HCT116 (cell line): ENCODE measurements at regions of chr11 and their contacts with region 1.

Region 1: DNA sequence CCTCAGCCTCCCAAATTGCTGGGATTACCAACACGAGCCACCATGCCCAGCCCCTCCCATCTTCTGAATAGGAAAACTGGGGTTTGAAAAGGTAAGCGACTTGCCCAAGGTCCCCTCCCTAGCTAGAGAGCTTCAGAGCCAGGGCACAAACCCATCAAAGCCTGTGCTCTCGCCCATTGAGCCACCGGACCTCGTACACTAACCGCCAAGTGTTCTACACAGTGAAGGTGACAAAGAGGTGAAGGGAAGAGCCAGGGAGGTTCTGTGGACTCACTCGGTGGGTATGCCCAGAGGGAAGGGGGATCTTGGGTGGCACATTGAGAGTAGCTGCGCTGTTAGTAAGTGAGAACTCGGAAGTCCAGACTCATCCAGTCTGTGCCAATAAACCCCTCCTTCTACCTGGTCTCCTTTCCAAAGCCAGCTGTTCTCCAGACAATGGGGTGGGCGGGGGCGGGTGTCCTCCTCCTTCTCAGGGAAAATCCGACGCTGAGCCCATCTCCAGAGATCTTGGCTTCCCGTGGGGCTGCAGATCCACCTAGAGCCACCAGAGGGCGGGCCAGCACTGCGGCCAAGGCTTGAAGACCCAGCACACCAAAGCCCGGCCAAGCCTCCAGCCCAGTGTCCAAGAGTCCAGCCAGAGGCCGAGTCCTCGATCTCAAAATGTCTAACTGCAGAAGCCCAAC is 3.2 kb upstream of the RTN4RL2 start:
- DNase-seq: peak; percentile 79
- ATAC-seq: peak; percentile 71
- H3K4me3 ChIP-seq: peak overlapping the region in 1 of 2 experiments; percentile 67; a peak in 2 of 4 replicates
- H3K27ac ChIP-seq: no peak overlapping the region
- H3K4me1 ChIP-seq: peaks cover 16 to 42% of the 10 kb centered on the region in 2 experiments; a peak in 3 of 4 replicates
- H3K27me3 ChIP-seq: peaks cover 3% of the 10 kb centered on the region; the same call in 1 of the 2 replicates
- CTCF ChIP-seq: peak; percentile 89 to 99 (median 89)
- POLR2A ChIP-seq: no peak
- RAD21 ChIP-seq: peak; percentile 94

Region 2: GRCh38 chr11:57530596-57531507 is 73.8 kb after region 1 on chr11 and contains the start of gene TIMM10:
- CTCF ChIA-PET with region 1: interaction called, 41 read pairs
- POLR2A ChIA-PET with region 1: interaction called, 3 read pairs
- RAD21 ChIA-PET with region 1: no interaction called
- intact Hi-C with region 1: loop called (anchors 1 kb)
- DNase-seq: peak; percentile 99
- ATAC-seq: peak; percentile 95
- H3K4me3 ChIP-seq: peak within 1 kb of the TSS; percentile 64 to 84
- H3K27ac ChIP-seq: peak within 1 kb of the TSS; percentile 61
- H3K4me1 ChIP-seq: peaks cover 16 to 17% of the 10 kb centered on the region in 2 experiments
- H3K27me3 ChIP-seq: no peaks in the 10 kb centered on the region
- CTCF ChIP-seq: no peak
- POLR2A ChIP-seq: peak; percentile 75
- RAD21 ChIP-seq: peak; percentile 16; the same call in 1 of the 2 replicates
- total RNA-seq, gene TIMM10: 65.6 TPM

Region 3: DNA sequence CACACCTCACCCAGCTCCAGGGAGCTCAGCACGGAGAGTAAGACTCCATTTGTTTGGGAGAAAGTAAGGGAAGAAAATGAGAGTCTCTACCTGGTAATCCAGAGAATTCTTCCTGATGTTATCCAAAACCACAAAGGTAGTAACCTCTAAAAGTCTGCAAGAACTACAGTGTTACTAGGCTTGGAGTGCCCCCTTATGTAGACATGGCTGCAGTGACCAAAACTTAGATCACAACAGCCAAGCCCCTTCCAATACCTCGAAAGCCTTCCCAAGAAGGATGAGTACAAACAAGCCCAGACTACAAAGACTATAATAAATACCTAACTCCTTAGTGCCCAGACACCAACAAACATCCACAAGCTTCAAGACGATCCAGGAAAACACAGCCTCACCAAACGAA is 105.5 kb after region 1 on chr11:
- CTCF ChIA-PET with region 1: interaction called, 4 read pairs
- POLR2A ChIA-PET with region 1: interaction called, 4 read pairs
- RAD21 ChIA-PET with region 1: no interaction called
- intact Hi-C with region 1: loop called (anchors 1 kb)
- DNase-seq: no peak
- ATAC-seq: no peak
- H3K4me3 ChIP-seq: no peak overlapping the region
- H3K27ac ChIP-seq: no peak overlapping the region
- H3K4me1 ChIP-seq: peaks cover 21% of the 10 kb centered on the region in 2 experiments; a peak in 3 of 4 replicates
- H3K27me3 ChIP-seq: no peaks in the 10 kb centered on the region
- CTCF ChIP-seq: no peak
- POLR2A ChIP-seq: no peak
- RAD21 ChIP-seq: peak; percentile 51

Region 4: DNA sequence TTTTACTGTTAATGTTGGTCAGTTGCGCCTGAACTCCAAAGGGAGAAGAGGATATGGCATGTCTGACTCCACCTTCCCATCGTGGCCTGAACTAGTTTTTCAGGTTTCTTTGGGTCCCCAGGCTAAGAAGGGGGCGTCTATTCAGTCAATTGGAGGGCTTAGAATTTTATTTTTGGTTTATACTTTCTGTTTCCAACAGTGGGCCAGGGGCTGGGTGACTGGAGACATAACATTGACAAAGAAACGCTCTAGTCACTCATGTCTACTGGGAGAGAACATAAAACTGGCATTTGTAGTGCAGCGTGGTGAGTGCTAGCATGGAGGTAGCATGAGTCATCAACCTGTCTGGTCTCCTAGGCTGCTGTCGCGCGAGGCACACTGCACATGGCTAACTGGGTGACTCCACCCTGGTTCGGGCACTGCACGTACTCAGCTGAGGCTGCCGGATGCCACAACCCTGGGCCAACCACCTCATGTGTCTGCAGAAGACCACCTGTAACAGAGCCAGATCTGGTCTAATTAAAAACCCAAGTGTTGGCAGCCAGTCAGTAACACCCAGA is 446.5 kb after region 1 on chr11:
- CTCF ChIA-PET with region 1: no interaction called
- POLR2A ChIA-PET with region 1: no interaction called
- RAD21 ChIA-PET with region 1: no interaction called
- intact Hi-C with region 1: loop called (anchors 5 kb)
- DNase-seq: peak; percentile 74
- ATAC-seq: peak; percentile 98
- H3K4me3 ChIP-seq: peak overlapping the region; percentile 7 to 24; a peak in 2 of 4 replicates
- H3K27ac ChIP-seq: peak overlapping the region; percentile 38
- H3K4me1 ChIP-seq: peaks cover 27 to 41% of the 10 kb centered on the region in 2 experiments
- H3K27me3 ChIP-seq: no peaks in the 10 kb centered on the region
- CTCF ChIP-seq: no peak
- POLR2A ChIP-seq: no peak
- RAD21 ChIP-seq: 0 out of 2 replicates have a peak, but pooled peaks have one; percentile 26